Activated naive CD4-positive, alpha-beta T cell treated with anti-CD3 and anti-CD28 coated beads, Interleukin-2, amount 10 ng/mL, durations not matched to agents 7 days and 5 days (primary cell): ENCODE measurements at regions of chr1 and their contacts with region 1.

Region 1: DNA sequence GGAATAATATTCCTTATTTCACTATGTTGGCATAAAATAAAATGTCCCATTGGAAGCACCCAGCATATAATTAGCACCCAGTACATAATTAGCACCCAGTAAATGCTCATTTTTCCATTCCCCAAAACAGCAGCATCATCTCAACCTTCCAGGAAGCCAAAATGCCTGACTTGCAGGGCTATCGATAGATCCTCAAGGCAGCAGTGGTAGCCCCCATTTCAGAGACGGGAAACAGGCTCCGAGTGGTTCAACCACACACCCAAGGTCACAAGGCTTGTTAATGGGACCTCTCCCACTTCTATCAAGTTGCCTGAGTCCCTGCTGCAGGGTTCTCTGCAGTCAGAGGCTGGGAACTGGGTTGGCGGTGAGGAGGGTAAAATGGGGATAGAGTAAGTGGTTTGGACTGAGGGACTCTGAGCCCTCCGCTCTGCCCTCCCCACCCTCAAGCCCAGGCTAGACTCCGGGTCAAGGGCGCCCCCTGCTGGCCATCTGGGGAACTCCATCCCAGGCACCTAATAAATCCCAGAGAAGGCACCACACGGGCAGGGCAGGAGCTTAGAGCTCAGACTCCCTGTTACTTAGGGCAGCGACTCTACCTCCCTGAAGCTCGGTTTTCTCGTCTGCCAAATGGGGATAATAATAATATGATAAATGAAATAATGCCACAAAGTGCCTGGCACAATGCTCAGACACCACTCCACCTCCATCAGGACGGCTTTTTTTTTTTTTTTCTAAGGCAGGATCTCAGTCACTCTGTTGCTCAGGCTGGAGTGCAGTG is 21.9 kb upstream of the LAPTM5 start:
- DNase-seq: peak; percentile 94
- H3K4me3 Mint-ChIP-seq: no peak overlapping the region
- H3K27ac Mint-ChIP-seq: peak overlapping the region; percentile 33
- H3K4me1 Mint-ChIP-seq: peaks cover 17% of the 10 kb centered on the region
- H3K27me3 Mint-ChIP-seq: peaks cover 67% of the 10 kb centered on the region

Region 2: DNA sequence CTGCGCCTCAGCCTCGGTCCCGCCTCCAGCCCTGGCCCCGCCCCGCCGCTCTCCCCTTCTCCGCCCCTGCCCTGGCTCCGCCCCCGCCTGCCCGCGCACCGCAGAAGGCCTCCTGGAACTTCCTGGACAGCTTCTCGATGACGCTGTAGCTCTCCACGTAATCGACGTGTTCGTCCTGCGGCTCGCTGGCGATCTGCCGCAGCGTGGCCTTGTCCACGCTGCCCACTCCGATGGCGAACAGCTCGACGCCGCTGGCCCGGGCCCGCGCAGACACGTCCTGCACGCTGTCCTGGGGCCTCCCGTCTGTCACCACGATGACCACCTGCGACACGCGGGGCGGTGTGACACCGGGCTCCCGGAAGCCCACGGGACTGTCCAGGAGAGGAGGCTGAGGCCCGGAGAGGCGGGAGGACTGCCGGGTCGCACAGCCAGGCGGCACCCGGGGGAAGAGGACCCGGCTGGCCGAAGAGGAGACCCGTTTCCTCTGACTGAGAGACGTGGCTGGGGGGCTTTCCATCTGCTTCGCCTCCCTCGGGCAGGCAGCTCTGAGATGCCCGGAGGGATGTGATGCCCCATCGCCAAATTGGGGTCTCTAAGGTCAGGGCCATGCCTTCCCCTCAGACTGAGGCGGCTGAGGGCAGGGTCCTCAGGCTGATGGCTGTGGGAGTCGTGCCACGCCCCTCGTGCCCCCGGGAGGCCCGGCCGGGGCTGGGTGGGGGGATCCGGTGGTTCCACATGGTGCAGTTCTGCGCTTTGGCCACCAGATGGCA is 60.7 kb before region 1 on chr1:
- CTCF ChIA-PET with region 1: interaction called, 465 read pairs
- DNase-seq: peak; percentile 87
- H3K4me3 Mint-ChIP-seq: peak overlapping the region; percentile 92
- H3K27ac Mint-ChIP-seq: peak overlapping the region; percentile 99
- H3K4me1 Mint-ChIP-seq: peaks cover 22% of the 10 kb centered on the region
- H3K27me3 Mint-ChIP-seq: peaks cover 12% of the 10 kb centered on the region

Region 3: GRCh38 chr1:30743584-30744059 is 35.9 kb before region 1 on chr1:
- CTCF ChIA-PET with region 1: interaction called, 36 read pairs
- DNase-seq: peak; percentile 85
- H3K4me3 Mint-ChIP-seq: peak overlapping the region; percentile 78
- H3K27ac Mint-ChIP-seq: peak overlapping the region; percentile 99
- H3K4me1 Mint-ChIP-seq: peaks cover 100% of the 10 kb centered on the region
- H3K27me3 Mint-ChIP-seq: no peaks in the 10 kb centered on the region

Region 4: DNA sequence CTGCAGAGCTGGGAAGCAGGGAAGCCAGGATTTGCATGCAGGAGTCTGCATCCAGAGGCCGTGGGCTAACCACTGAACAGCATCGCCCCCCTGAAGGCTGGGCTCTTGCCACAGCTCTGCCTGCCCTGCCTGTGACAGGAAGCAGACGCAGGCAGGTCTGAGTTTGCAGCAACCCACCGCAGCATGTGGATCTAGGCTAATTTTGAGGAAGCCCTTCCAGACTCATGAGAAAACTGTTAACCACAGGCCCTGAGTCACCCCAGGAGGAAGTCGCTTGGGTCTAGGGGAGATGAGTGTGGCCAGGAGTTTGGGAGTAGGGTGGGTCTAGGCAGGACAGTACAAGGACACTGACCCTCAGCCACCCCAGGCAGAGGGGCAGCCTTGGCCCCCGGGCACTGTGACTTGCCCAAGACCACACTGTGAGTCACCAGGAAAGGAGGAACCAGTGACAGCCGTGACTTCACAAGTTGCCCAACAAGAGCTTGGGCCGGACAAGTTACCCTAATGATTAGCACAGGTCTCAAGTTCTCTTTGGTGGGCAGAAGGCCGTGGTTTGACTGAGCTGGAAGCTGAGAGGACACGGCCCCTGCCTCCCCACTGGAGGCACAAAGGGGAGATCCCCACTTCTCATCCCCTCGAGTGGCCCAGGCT is 22.8 kb before region 1 on chr1:
- CTCF ChIA-PET with region 1: interaction called, 50 read pairs
- DNase-seq: peak; percentile 82
- H3K4me3 Mint-ChIP-seq: peak overlapping the region; percentile 98
- H3K27ac Mint-ChIP-seq: peak overlapping the region; percentile 96
- H3K4me1 Mint-ChIP-seq: peaks cover 84% of the 10 kb centered on the region
- H3K27me3 Mint-ChIP-seq: no peaks in the 10 kb centered on the region

Region 5: DNA sequence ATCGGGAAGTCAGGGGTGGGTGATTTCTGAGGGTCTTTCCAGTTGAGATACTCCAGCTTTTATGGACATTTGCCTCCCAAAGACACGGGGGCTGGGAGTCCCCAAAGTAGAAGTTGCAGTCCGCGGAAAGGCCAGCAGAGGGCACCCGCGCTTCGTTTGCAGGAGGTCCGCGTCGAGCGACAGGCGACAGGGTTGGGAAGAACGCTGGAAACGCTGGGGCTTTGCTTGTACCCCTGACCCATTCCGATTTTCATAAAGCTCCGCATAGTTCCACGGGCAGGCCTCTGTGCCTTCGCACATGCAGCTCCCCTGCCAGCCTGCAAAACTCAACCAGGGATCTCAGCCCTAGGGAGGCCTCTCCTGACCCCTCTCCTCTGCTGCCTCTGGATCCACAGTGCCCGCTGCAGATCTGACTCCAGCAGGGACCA is 22.3 kb after region 1 on chr1:
- CTCF ChIA-PET with region 1: interaction called, 29 read pairs
- DNase-seq: peak; percentile 84
- H3K4me3 Mint-ChIP-seq: no peak overlapping the region
- H3K27ac Mint-ChIP-seq: no peak overlapping the region
- H3K4me1 Mint-ChIP-seq: peaks cover 2% of the 10 kb centered on the region
- H3K27me3 Mint-ChIP-seq: peaks cover 57% of the 10 kb centered on the region

Region 6: DNA sequence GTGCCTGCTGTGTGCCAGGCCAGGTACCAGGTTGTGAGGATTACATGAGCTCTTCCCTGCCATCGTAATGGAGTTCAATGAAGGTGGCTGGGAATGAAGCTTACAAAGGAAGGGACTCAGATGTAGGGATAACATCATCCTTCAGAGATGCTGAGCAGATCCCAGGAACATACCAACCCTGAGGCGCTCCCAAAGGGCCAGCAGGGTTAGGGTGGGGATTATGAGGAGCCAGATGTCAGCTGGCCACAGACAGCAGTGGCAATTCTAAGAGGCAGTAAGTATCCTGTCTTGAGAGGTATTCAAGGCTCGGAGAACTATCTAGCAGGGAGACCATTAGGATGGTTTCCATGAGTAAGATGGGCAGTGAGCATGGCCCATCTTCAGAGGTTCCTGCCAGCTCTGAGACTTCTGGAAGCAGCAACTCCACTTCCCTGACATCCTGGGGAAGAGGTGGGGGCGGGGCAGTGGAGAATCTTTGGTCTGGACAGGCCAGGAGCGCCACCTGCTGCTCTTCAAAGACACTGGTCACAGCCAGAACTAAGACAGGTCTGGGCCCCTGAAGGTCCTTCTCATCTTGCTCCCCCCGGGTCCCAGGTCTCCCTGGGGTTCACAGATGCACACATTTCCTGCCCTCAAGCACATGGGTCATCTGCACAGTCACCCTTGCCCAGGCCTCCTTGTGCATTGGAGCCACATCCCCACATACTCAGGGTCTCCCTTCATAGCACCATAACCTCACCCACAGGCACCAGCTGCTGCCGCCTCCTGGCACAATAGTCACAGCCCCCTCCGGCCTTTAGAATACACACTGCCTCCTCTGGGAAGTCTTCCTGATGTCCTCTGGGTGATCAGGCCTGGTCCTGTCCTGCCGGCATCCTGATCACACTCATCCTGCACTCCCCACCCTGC is 131.8 kb after region 1 on chr1:
- CTCF ChIA-PET with region 1: interaction called, 52 read pairs
- DNase-seq: peak; percentile 74
- H3K4me3 Mint-ChIP-seq: no peak overlapping the region
- H3K27ac Mint-ChIP-seq: no peak overlapping the region
- H3K4me1 Mint-ChIP-seq: peaks cover 18% of the 10 kb centered on the region
- H3K27me3 Mint-ChIP-seq: peaks cover 61% of the 10 kb centered on the region

Region 7: DNA sequence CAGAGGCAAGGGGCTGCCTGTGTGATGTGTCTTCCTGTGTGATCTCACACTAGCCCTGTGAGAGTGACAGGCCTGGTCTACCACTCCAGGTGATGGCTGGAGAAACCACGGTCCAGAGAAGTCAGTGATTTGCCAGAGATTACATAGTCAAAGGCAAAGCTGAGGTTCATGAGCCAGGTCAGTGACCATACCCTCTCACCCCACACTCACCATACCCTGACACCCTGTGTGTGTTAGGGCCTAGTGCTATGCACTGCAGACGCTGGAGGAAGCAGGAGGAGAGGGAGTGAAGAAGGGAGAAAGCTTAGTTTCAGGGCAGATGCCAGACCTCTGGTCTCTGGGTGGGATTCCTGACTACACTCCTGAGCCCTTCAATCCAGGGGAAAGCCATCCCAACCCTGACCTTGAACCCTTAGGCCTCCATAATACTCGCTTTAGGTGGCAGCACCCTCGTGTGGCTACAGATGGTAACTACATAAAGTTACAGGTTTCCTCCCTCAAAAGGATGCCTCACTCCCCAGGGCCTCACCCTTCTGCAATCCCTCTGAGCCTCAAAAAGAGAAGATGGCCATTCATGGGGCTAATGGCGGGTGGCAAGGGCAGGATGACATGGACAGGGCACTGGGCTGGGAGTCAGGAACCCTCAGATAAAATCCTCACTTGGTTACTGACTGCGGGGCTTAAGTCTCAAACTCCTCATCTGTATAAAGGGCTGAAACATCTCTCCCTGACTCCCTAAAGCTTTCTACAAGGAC is 149.8 kb after region 1 on chr1:
- CTCF ChIA-PET with region 1: interaction called, 13 read pairs
- DNase-seq: peak; percentile 71
- H3K4me3 Mint-ChIP-seq: no peak overlapping the region
- H3K27ac Mint-ChIP-seq: no peak overlapping the region
- H3K4me1 Mint-ChIP-seq: no peaks in the 10 kb centered on the region
- H3K27me3 Mint-ChIP-seq: no peaks in the 10 kb centered on the region

Region 8: GRCh38 chr1:30965924-30966599 is 186.6 kb after region 1 on chr1:
- CTCF ChIA-PET with region 1: no interaction called
- DNase-seq: no peak
- H3K4me3 Mint-ChIP-seq: no peak overlapping the region
- H3K27ac Mint-ChIP-seq: no peak overlapping the region
- H3K4me1 Mint-ChIP-seq: no peaks in the 10 kb centered on the region
- H3K27me3 Mint-ChIP-seq: no peaks in the 10 kb centered on the region